OCI-LY7 (cell line): ENCODE measurements at regions of chr4 and their contacts with region 1.

Region 1: GRCh38 chr4:85147439-85148076 is 181.1 kb upstream of the WDFY3 start:
- DNase-seq: peak; percentile 61
- H3K4me3 ChIP-seq: no peak overlapping the region
- H3K27ac ChIP-seq: no peak overlapping the region
- H3K4me1 ChIP-seq: no peaks in the 10 kb centered on the region
- CTCF ChIP-seq: peak; percentile 82

Region 2: DNA sequence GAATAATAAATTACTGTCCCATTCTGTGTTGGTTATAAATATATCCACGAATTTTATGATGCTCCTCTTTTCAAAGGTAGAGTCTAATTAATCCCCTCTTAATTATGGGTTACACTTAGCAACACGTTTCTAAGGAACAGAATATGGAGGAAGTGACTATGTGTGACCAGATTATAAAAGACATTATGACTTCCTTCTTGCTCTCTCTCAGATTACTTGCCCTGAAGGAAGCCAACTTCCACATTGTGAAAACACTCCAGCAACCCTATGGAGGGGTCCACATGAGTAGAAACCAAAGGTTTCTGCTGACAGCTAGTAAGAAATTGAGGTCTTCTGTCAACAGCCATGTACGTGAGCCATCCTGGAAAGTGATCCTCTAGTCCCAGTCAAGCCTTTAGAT is 240.4 kb before region 1 on chr4:
- CTCF ChIA-PET with region 1: no interaction called
- POLR2A ChIA-PET with region 1: no interaction called
- intact Hi-C with region 1: no loop called
- DNase-seq: no peak
- H3K4me3 ChIP-seq: no peak overlapping the region
- H3K27ac ChIP-seq: no peak overlapping the region
- H3K4me1 ChIP-seq: no peaks in the 10 kb centered on the region
- CTCF ChIP-seq: no peak

Region 3: DNA sequence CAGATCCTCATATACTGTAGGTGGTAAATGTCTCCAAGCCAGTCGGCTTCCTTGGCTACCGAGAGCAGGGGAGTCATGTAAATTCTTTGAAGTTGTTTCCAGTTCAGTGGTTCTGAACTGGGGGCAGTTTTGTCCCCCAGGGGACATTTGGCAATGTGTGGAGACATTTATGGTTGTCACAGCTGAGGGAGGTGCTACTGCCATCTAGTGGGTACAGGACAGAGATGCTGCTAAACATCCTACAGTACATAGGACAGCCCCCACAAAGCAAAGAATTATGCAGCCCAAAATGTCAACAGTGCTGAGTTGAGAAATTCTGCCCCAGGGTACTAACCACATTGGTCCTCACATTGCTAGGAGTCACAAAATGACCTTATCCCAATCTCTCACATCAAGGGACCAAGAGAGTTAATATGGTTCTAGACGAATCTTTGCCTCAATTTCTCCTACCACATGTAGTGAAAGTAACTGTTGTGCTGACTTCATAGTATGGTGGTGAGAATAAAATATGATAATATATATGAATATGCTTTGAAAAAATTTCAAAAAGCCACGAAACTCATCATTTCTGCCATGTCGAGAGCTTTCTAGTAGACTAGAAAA is 223.0 kb after region 1 on chr4:
- CTCF ChIA-PET with region 1: no interaction called
- POLR2A ChIA-PET with region 1: no interaction called
- intact Hi-C with region 1: loop called (anchors 10 kb)
- DNase-seq: peak; percentile 64
- H3K4me3 ChIP-seq: no peak overlapping the region
- H3K27ac ChIP-seq: no peak overlapping the region
- H3K4me1 ChIP-seq: peaks cover 4% of the 10 kb centered on the region
- CTCF ChIP-seq: peak; percentile 92

Region 4: GRCh38 chr4:85543832-85544231 is 396.3 kb after region 1 on chr4:
- CTCF ChIA-PET with region 1: no interaction called
- POLR2A ChIA-PET with region 1: no interaction called
- intact Hi-C with region 1: loop called (anchors 10 kb)
- DNase-seq: no peak
- H3K4me3 ChIP-seq: no peak overlapping the region
- H3K27ac ChIP-seq: no peak overlapping the region
- H3K4me1 ChIP-seq: no peaks in the 10 kb centered on the region
- CTCF ChIP-seq: no peak

Region 5: GRCh38 chr4:85798012-85798770 is 650.6 kb after region 1 on chr4:
- CTCF ChIA-PET with region 1: interaction called, 3 read pairs
- POLR2A ChIA-PET with region 1: no interaction called
- intact Hi-C with region 1: loop called (anchors 2 kb)
- DNase-seq: no peak
- H3K4me3 ChIP-seq: no peak overlapping the region
- H3K27ac ChIP-seq: no peak overlapping the region
- H3K4me1 ChIP-seq: peaks cover 6% of the 10 kb centered on the region
- CTCF ChIP-seq: no peak

Region 6: GRCh38 chr4:85968945-85969819 is 821.6 kb after region 1 on chr4:
- CTCF ChIA-PET with region 1: no interaction called
- POLR2A ChIA-PET with region 1: interaction called, 3 read pairs
- intact Hi-C with region 1: loop called (anchors 1 kb)
- DNase-seq: peak; percentile 49
- H3K4me3 ChIP-seq: no peak overlapping the region
- H3K27ac ChIP-seq: no peak overlapping the region
- H3K4me1 ChIP-seq: no peaks in the 10 kb centered on the region
- CTCF ChIP-seq: peak; percentile 85

Region 7: GRCh38 chr4:86043755-86044592 is 896.4 kb after region 1 on chr4:
- CTCF ChIA-PET with region 1: no interaction called
- POLR2A ChIA-PET with region 1: no interaction called
- intact Hi-C with region 1: loop called (anchors 10 kb)
- DNase-seq: peak; percentile 57
- H3K4me3 ChIP-seq: no peak overlapping the region
- H3K27ac ChIP-seq: no peak overlapping the region
- H3K4me1 ChIP-seq: no peaks in the 10 kb centered on the region
- CTCF ChIP-seq: peak; percentile 89